Esophagus muscularis mucosa (tissue), 4 donors: ENCODE measurements at regions of chr3 and their contacts with region 1.

Region 1: DNA sequence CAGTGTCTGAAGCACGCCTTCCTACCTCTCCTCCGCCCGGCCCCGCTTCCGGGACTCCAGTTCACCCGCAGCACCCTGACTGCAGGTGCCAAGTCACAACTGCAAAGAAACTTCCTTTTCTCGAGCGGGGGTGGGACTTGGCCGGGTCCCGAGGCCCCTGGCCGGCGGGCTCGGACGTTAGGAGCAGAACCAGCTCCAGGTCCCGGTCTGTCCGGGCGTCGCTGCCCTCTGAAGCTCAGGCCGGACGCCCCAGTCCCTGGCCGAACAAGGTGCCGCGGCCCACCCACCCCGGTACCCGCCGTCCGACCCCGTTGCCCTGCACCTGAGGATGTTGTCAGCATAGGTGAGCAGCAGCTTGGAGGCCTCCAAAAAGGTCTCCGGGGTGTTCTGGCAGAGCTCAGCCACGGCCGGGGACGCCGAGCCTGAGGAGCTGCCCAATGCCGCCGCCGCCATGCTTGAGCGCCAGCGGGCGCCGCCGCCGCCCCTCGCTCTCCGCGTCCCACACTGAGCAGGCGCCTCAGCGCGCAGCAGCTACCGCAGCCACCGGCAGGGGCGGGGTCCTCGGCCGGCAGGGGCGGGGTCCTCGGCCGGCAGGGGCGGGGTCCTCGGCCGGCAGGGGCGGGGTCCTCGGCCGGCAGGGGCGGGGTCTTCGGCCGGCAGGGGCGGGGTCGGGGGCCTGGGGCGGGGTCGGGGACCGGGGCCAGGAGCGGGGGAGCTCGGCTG is at the start of gene NGLY1:
- DNase-seq: peak; percentile 95
- H3K4me3 ChIP-seq: peak within 1 kb of the TSS; percentile 92 to 97 (median 92)
- H3K27ac ChIP-seq: peak within 1 kb of the TSS; percentile 92 to 95 (median 92)
- H3K4me1 ChIP-seq: peaks cover 16 to 26% (median 22%) of the 10 kb centered on the region in 4 donors
- H3K27me3 ChIP-seq: no peaks in the 10 kb centered on the region
- CTCF ChIP-seq: peak; percentile 17 to 50 (median 21)
- EP300 ChIP-seq: no peak
- POLR2A ChIP-seq: peak; percentile 72
- total RNA-seq, gene NGLY1: 21.2 to 25.7 (median 23.3) TPM

Region 2: GRCh38 chr3:25664810-25665314 is 118.2 kb before region 1 on chr3 and contains the start of gene TOP2B:
- intact Hi-C with region 1: loop called (anchors 2 kb)
- DNase-seq: peak; percentile 99
- H3K4me3 ChIP-seq: peak within 1 kb of the TSS; percentile 68 to 90 (median 80)
- H3K27ac ChIP-seq: peak within 1 kb of the TSS; percentile 96 to 99 (median 98)
- H3K4me1 ChIP-seq: peaks cover 25 to 42% (median 39%) of the 10 kb centered on the region in 4 donors
- H3K27me3 ChIP-seq: no peaks in the 10 kb centered on the region
- CTCF ChIP-seq: no peak
- EP300 ChIP-seq: no peak
- POLR2A ChIP-seq: peak; percentile 72
- total RNA-seq, gene TOP2B: 87.1 to 115 (median 107) TPM

Region 3: DNA sequence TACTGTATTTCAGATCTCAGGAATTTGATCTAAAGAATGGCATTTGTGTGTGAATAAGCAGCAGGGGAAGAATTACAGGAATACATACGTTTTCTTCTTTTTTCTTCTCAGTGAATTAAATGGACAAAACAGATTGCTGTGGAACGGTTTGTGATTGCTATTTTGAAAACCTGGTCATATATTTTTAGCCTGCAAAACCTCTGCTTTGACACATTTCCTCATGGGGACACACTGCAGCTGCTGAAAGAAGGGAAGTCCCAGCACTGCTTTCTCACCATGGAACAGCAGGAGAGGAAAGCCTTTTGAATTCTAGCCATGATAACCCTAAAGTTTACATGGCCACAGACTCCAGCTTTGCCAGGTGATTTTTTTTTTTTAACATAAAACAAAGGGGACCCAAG is 321.8 kb after region 1 on chr3:
- intact Hi-C with region 1: no loop called
- DNase-seq: no peak
- H3K4me3 ChIP-seq: no peak overlapping the region
- H3K27ac ChIP-seq: peak overlapping the region; percentile 21 to 64 (median 43)
- H3K4me1 ChIP-seq: peaks cover 28 to 46% (median 41%) of the 10 kb centered on the region in 4 donors
- H3K27me3 ChIP-seq: no peaks in the 10 kb centered on the region
- CTCF ChIP-seq: no peak
- EP300 ChIP-seq: no peak
- POLR2A ChIP-seq: no peak

Region 4: DNA sequence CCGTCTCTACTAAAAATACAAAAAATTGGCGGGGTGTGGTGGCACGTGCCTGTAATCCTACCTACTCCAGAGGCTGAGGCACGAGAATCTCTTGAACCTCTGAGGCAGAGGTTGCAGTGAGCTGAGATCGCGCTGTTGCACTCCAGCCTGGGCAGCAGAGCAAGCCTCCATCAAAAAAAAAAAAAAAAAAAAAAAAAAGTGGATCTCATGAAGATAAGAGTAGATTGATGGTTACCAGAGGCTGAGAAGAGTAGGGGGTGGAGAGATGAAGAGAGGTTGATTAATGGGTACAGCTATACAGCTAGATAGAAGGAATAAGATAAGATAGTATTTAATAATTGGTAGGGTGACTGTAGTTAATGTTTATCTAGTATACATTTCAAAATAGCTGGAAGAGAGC is 773.5 kb after region 1 on chr3:
- intact Hi-C with region 1: no loop called
- DNase-seq: no peak
- H3K4me3 ChIP-seq: no peak overlapping the region
- H3K27ac ChIP-seq: no peak overlapping the region
- H3K4me1 ChIP-seq: no peaks in the 10 kb centered on the region
- H3K27me3 ChIP-seq: no peaks in the 10 kb centered on the region
- CTCF ChIP-seq: no peak
- EP300 ChIP-seq: no peak
- POLR2A ChIP-seq: no peak